Spleen (tissue), 13 donors: ENCODE measurements at regions of chr4 and their contacts with region 1.

Region 1: DNA sequence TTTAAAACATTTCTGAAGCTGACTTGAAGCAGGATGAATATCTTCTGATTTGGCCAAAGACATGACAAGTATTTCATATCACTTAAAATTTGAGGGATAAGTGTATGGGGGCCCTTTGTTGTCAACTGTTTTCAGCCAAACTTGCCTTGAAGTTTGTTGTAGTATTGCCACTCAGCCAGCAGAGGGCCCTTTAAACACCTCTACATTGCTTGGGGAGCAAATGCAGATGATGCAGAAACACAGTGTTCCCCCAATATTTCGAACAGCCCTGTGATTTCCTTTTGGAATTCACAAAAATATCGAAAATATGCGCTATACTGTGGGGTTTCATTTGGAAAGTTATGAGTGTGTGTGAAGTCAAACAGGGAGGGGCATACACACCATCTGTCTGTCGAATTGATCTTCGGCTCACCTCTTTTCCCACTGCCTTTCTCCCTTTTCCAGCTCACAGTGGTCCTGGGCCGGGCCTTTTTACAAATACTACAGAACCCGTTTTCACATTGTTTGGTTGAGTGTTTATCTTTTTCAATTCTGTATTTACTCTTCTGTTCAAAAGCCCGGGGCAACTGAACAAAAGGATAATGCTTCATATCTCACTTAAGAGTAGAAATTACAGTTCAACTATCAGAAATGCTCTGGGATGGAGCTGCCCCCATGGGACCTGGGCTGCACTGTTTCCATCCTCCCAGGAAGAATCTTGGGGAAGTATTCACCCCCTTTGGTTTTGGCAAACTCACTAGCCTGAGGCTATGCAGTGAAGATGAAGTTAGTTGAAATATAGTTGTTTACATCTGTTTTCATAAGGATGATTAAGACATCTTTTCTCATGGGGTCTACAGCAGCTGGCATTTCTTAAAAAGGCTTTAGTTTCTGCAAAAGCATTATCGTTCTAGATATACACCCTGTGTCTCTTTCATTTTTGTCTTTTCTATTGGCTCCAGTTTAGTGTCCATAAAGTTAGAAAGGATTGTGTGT is 137.6 kb downstream of the EGF start:
- DNase-seq: no peak
- H3K4me3 ChIP-seq: no peak overlapping the region
- H3K27ac ChIP-seq: no peak overlapping the region
- H3K4me1 ChIP-seq: no peaks in the 10 kb centered on the region
- H3K27me3 ChIP-seq: no peaks in the 10 kb centered on the region
- CTCF ChIP-seq: peak; percentile 33 to 80 (median 65)
- POLR2A ChIP-seq: no peak

Region 2: DNA sequence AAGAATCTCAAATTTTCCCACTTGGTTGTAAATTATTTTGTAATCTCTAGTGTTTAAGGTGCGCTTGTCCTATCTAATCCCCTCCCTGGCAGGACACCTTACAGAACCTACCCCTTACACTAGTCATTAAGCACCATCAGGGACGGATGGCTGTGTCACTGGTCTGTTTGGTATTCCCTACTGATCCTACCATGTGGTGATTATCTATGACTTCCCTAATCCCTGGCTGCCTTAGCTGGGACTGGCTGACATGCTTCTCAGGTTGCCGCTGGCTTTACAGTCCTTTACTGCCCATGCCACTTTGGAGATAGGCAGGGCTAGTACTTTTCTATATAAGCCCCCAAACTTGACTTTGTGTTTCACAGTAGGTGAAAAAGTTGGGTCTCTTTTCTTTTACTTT is 89.6 kb after region 1 on chr4:
- intact Hi-C with region 1: no loop called
- DNase-seq: no peak
- H3K4me3 ChIP-seq: no peak overlapping the region
- H3K27ac ChIP-seq: no peak overlapping the region
- H3K4me1 ChIP-seq: no peaks in the 10 kb centered on the region
- H3K27me3 ChIP-seq: no peaks in the 10 kb centered on the region
- CTCF ChIP-seq: no peak
- POLR2A ChIP-seq: no peak

Region 3: GRCh38 chr4:110196206-110196870 is 146.1 kb after region 1 on chr4:
- intact Hi-C with region 1: loop called (anchors 5 kb)
- DNase-seq: peak; percentile 90
- H3K4me3 ChIP-seq: peak overlapping the region; percentile 75 to 96 (median 89)
- H3K27ac ChIP-seq: peak overlapping the region; percentile 73 to 92 (median 91)
- H3K4me1 ChIP-seq: peaks cover 0 to 57% (median 33%) of the 10 kb centered on the region in 6 donors
- H3K27me3 ChIP-seq: peaks cover 0 to 9% (median 0%) of the 10 kb centered on the region in 7 donors
- CTCF ChIP-seq: no peak
- POLR2A ChIP-seq: no peak

Region 4: DNA sequence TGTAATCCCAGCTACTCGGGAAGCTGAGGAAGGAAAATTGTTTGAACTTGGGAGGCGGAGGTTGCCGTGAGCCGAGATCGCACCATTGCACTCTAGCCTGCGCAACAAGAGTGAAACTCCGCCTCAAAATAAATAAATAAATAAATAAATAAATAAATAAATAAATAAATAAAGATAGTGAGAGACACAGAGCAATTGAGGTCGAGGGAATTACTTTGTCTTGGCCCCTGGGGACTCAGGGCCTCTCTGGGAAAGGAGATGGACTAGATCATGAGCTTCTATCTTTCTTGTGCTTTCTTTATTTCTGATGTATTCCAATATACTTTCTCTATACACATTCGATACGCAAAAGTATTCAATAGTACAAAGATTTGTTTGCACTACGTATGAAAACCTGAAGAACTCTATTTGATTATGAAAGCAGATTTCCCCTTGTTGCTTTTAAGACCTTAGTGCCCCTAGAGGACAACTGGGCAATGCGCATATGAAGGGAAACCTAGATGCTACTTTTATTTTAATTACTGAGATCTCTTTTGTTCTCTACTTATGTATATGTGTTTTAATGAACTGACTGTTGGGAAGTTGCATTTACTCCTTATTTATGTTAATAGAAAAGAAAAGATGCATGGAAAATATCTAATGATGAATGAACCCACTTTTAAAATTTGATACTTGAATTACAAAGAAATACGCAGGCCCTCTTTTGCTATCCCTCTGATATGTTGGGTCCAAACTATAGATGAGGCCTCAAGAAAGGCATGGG is 160.9 kb after region 1 on chr4:
- intact Hi-C with region 1: loop called (anchors 5 kb)
- DNase-seq: no peak
- H3K4me3 ChIP-seq: no peak overlapping the region
- H3K27ac ChIP-seq: no peak overlapping the region
- H3K4me1 ChIP-seq: peaks cover 0 to 3% (median 0%) of the 10 kb centered on the region in 6 donors
- H3K27me3 ChIP-seq: no peaks in the 10 kb centered on the region
- CTCF ChIP-seq: peak; percentile 32 to 83 (median 67)
- POLR2A ChIP-seq: no peak